ENCODE measurements at regions of chr4 and their contacts with region 1.

Region 1: DNA sequence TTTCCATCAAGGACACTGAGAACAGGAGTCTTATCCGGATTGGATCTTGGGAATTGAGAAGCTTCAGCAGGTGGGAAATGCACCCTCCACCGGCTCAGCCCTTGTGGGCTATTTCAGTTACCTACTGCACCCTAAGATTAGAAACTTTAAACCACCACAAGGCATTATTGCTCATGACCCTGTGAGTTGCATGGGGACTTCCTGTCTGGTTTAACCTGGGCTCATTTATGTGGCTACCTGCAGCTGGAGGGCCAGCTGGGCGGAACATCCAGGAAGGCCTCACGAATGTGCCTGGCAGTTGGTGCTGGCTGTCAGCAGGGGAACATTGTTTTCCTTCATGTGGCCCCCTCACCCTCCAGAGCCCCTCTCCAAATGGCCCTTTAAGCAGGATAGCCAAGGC is 164.1 kb downstream of the DEFB131A start:
- DNase-seq: no peak
- H3K4me3 Mint-ChIP-seq: no peak overlapping the region
- H3K27ac Mint-ChIP-seq: no peak overlapping the region
- H3K4me1 Mint-ChIP-seq: peaks cover 26% of the 10 kb centered on the region
- H3K27me3 Mint-ChIP-seq: no peaks in the 10 kb centered on the region

Region 2: GRCh38 chr4:9762823-9763475 is 154.6 kb after region 1 on chr4:
- CTCF ChIA-PET with region 1: no interaction called
- intact Hi-C with region 1: no loop called
- DNase-seq: peak; percentile 63
- H3K4me3 Mint-ChIP-seq: no peak overlapping the region
- H3K27ac Mint-ChIP-seq: no peak overlapping the region
- H3K4me1 Mint-ChIP-seq: no peaks in the 10 kb centered on the region
- H3K27me3 Mint-ChIP-seq: peaks cover 16% of the 10 kb centered on the region

Region 3: GRCh38 chr4:10006231-10006600 is 397.9 kb after region 1 on chr4:
- CTCF ChIA-PET with region 1: no interaction called
- intact Hi-C with region 1: loop called (anchors 10 kb)
- DNase-seq: no peak
- H3K4me3 Mint-ChIP-seq: no peak overlapping the region
- H3K27ac Mint-ChIP-seq: no peak overlapping the region
- H3K4me1 Mint-ChIP-seq: peaks cover 18% of the 10 kb centered on the region
- H3K27me3 Mint-ChIP-seq: no peaks in the 10 kb centered on the region

Region 4: DNA sequence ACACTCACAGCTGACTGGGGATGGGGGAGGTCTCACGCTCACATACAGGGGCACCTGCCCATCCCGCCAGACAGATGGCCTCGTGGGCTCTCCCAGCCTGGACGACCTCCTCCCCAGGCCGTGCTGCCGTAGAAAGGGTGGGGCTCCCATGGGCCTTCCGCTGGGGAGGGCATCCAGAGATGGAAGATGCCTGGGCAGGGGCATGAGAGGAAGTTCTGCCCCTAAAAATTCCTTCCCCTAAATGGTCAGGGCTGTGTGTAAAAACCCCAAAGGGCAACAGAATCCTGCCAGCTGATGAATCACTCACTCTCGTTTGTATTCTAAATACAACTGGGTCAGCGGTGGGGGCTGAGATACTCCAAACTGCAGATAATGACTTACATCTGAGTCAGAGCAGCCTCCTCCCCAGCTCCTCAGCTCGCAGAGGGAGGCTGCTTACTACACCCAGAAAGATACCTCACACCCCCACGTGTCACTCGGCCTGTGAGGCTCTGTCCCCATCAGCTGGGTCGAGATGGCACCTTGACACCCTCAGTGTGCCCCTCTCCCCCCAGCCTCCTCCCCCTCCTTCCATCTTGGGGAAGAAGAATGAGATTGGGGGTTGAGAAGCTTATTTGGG is 498.2 kb after region 1 on chr4:
- CTCF ChIA-PET with region 1: no interaction called
- intact Hi-C with region 1: loop called (anchors 10 kb)
- DNase-seq: peak; percentile 92
- H3K4me3 Mint-ChIP-seq: peak overlapping the region; percentile 52
- H3K27ac Mint-ChIP-seq: peak overlapping the region; percentile 90
- H3K4me1 Mint-ChIP-seq: peaks cover 100% of the 10 kb centered on the region
- H3K27me3 Mint-ChIP-seq: no peaks in the 10 kb centered on the region

Region 5: GRCh38 chr4:10273030-10273429 is 664.7 kb after region 1 on chr4:
- CTCF ChIA-PET with region 1: no interaction called
- intact Hi-C with region 1: no loop called
- DNase-seq: no peak
- H3K4me3 Mint-ChIP-seq: no peak overlapping the region
- H3K27ac Mint-ChIP-seq: no peak overlapping the region
- H3K4me1 Mint-ChIP-seq: peaks cover 5% of the 10 kb centered on the region
- H3K27me3 Mint-ChIP-seq: no peaks in the 10 kb centered on the region